ENCODE measurements at regions of chr15 and their contacts with region 1.

Region 1: GRCh38 chr15:68154923-68155559 is 50.1 kb downstream of the CALML4 start:
- DNase-seq: peak; percentile 79
- H3K4me3 ChIP-seq: no peak overlapping the region
- H3K27ac ChIP-seq: no peak overlapping the region
- H3K4me1 ChIP-seq: no peaks in the 10 kb centered on the region
- H3K27me3 ChIP-seq: no peaks in the 10 kb centered on the region
- CTCF ChIP-seq: peak; percentile 81

Region 2: DNA sequence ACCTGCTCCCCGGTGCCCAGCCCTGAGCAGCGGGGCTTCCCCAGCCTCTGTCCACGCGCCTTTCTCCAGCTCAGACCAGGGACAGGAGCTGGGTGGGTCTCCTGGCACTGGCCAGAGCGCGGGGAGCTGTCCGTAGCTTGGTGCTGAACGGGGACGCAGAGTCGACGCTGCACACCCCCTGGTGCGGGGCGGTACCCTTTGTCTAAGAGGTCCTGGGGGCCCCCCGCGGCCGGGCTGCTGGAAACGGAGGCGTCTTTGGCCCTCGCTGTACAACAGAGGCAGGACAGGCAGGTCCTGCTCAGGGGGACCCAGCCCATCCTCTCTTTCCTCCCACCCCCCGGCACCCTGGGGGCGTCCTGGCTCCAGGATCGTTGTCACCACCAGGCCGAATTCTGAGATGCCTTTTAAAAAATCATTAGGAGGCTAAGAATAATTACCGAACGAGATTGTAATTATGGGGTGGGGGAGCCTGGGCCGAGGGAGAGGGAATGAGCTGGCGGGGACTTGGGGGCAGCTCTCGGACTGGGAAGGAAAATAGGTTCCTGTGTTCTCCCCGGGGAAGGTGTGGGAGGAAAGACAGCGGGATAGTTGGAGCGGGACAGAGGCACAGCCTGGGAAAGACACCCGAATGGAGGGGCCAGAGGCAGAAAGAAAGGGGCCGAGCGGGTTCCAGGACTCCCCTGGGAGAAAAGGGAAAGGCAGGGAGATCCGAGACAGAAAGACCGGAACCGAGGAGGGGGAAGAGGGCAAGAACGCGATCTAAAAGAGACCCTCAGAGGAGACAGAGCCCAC is 333.9 kb before region 1 on chr15:
- CTCF ChIA-PET with region 1: interaction called, 15 read pairs
- POLR2A ChIA-PET with region 1: no interaction called
- intact Hi-C with region 1: no loop called
- DNase-seq: no peak
- H3K4me3 ChIP-seq: no peak overlapping the region
- H3K27ac ChIP-seq: no peak overlapping the region
- H3K4me1 ChIP-seq: peaks cover 26% of the 10 kb centered on the region
- H3K27me3 ChIP-seq: peaks cover 77% of the 10 kb centered on the region
- CTCF ChIP-seq: no peak

Region 3: DNA sequence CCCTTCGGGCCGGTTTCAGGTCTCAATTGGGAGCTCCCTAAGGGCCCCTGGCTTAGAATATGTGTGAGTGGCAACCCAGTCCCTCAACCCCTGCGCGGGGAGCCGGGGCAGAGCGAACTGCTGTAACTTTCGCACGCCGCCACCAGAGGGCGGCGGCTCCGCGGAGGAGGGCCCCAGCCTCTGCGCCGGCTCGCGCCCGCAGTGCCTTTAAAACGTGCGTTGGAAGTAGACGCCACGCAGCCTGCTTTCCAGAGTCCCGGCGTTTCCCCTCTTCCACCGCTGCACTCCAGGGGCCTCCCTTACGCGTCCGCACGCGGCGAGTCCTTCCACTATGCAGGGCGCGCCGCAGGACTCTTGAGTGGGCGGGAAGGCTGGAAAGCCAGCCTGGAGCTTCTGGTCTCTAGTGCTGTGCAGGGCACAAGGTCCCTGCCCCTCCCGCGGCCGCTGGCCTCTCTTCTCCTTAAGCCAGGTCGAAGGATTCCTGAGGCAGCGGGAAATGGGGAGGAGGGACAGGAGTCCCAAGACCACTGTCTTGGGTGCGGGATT is 291.5 kb before region 1 on chr15:
- CTCF ChIA-PET with region 1: interaction called, 19 read pairs
- POLR2A ChIA-PET with region 1: no interaction called
- intact Hi-C with region 1: loop called (anchors 1 kb)
- DNase-seq: peak; percentile 91
- H3K4me3 ChIP-seq: peak overlapping the region; percentile 38
- H3K27ac ChIP-seq: no peak overlapping the region
- H3K4me1 ChIP-seq: no peaks in the 10 kb centered on the region
- H3K27me3 ChIP-seq: no peaks in the 10 kb centered on the region
- CTCF ChIP-seq: peak; percentile 97

Region 4: DNA sequence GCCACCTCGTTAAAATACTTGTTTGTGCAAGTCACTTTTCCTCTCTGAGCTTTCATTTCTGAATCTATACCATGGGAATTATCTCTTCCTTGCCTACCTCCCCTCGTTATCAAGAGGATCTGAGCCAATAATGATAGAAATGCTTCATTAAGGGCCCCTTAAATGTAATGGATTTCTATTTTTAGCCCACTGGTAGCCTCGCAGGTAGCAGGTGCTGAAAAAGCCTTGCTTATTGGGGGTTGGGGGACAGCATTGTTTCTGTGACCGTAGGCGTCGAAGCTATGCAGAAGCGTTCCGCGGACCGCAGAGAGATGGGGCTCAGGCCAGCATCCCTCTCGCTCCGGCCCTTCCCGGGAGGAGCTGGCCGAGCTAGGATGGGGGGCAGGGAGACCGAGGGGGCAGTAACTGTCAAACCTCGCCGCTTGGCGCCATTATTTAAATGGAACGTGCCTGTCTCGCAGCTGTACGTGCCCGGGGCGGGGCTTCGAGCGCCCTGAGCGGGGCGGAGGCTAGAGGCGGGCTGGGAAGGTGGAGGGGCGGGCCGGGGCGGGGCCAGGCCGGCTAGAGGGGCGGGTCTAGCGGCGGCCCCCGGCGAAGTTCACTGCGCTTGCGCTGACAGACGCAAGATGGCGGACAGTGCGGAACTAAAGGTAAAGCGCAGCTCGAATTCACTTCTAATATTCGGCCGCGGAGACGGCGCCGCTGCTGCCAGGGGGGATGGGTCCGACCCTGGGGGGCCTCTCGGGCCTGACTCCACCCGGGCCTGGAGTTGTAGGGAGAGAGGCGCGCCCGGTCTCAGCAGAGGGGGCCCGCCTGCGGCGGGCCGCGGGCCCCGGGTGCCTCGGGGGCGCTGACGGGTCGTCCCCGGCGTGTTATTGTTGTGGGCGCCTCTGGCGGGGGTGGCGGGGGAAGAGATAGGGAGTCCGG is 101.1 kb before region 1 on chr15 and contains the start of gene PIAS1:
- CTCF ChIA-PET with region 1: no interaction called
- POLR2A ChIA-PET with region 1: no interaction called
- intact Hi-C with region 1: loop called (anchors 5 kb)
- DNase-seq: peak; percentile 95
- H3K4me3 ChIP-seq: peak within 1 kb of the TSS; percentile 88
- H3K27ac ChIP-seq: peak within 1 kb of the TSS; percentile 88
- H3K4me1 ChIP-seq: peaks cover 21% of the 10 kb centered on the region
- H3K27me3 ChIP-seq: no peaks in the 10 kb centered on the region
- CTCF ChIP-seq: peak; percentile 19; the same call in 1 of the 2 replicates
- total RNA-seq, gene PIAS1: 37.5 and 40.2 TPM in 2 replicates

Region 5: DNA sequence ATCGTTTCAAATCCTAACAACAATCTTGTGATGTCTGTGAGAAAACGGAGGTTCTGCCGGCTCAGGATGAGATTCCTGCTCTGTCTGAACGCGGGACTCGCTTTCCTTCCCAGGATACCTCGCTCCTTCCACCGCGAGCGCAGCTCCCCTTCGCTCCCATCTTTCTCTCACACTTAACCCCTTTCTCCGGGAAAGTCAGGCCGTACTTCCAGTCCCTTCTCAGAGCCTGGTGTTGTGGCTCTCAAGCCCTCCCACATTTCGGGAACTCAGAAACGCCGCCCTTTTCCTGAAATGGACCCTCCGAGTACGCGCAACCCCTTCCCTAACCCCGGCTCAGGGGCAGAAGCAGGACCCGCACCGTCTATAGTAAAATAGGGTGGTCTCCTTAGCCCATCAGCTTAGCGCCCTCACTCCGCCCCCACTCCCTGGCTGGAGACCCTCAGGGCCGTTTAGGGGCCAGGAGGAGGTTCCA is 122.1 kb after region 1 on chr15:
- CTCF ChIA-PET with region 1: no interaction called
- POLR2A ChIA-PET with region 1: no interaction called
- intact Hi-C with region 1: no loop called
- DNase-seq: no peak
- H3K4me3 ChIP-seq: peak overlapping the region; percentile 93
- H3K27ac ChIP-seq: peak overlapping the region; percentile 93
- H3K4me1 ChIP-seq: peaks cover 25% of the 10 kb centered on the region
- H3K27me3 ChIP-seq: no peaks in the 10 kb centered on the region
- CTCF ChIP-seq: no peak

Measured in A673 (cell line).